ENCODE measurements at regions of chr17 and their contacts with region 1.

Region 1: DNA sequence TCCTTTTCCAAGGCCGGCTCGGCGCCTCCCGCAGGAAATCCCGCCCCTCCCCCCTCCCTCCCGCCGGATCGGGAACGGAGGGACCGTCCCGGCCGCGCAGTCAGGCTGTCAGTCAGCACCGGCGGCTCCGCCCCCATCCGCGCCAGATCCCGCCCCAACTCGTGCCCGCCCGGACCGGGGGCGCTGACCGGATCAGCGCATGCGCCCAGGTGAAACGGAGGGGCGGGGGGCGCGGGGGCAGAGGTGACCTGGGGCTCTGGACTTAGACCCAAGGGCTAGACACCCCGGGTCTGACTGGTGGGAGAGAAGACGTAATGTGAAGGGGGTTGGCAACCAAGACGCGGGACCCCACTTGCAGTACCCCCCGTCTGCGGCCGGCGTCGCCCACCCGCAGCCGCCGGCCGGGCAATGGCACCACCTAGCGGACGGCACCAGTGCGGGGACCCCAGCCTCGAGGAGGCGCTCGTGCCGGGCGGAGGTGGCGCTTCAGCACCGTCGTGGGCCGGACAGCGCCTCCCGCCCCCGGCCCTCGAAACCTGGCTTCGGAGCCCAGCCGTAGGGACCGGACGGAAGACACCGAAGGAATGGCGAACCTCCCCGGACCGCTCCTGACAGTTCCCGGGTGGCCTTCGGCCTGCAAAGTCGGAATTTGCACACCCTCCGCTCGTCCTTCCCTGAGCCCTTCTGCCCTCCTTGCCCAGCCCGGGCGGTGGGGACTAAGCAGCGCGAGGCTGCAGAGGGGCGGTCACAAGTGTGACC is at the start of gene CASKIN2:
- DNase-seq: peak; percentile 91
- H3K4me3 ChIP-seq: peak within 1 kb of the TSS; percentile 91
- H3K27ac ChIP-seq: peak within 1 kb of the TSS; percentile 13
- H3K4me1 ChIP-seq: peaks cover 31% of the 10 kb centered on the region
- CTCF ChIP-seq: peak; percentile 100
- total RNA-seq, gene CASKIN2: not detected in 2 replicates

Region 2: DNA sequence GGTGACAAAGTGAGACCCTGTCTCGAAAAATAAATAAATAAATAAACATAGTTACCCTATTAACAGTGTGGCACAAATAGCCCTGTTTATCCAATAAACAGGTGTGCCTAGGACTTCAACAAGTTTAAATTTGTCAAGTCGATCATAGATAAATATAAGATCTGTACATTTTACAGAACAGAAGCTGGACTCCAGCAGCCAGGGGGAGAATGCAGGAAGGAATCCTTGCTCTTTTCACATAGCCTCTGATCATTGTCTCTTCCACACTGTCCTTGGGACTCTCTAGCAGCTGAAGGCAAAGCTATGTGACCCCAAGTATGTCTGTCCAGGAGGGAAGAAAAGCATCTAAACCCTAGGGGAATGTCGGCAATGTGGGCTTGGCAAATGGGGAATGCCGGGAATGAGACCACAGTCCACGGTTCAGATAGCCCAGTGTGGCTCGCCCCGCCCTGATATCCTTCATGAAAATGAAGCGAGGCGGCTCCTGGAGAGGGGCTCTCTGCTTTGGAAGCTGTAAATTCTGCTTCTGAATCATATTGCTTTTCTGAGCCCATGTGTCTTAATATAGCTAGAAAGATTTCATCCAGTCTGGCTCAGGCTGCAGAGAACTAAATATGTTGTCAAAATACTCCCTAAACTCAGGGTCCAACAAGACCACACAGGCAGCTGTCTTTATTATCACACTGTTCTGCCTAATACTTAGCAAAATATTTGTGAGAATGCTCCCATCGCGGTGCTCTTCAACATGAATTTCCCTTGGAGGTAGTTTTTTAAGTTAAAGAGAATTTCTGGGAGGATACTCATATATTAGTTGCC is 85.3 kb before region 1 on chr17:
- CTCF ChIA-PET with region 1: no interaction called
- POLR2A ChIA-PET with region 1: interaction called, 3 read pairs
- intact Hi-C with region 1: loop called (anchors 1 kb)
- DNase-seq: no peak
- H3K4me3 ChIP-seq: no peak overlapping the region
- H3K27ac ChIP-seq: no peak overlapping the region
- H3K4me1 ChIP-seq: peaks cover 7% of the 10 kb centered on the region
- CTCF ChIP-seq: no peak

Region 3: GRCh38 chr17:75565068-75565467 is 49.4 kb after region 1 on chr17:
- CTCF ChIA-PET with region 1: no interaction called
- POLR2A ChIA-PET with region 1: interaction called, 3 read pairs
- intact Hi-C with region 1: loop called (anchors 5 kb)
- DNase-seq: no peak
- H3K4me3 ChIP-seq: no peak overlapping the region
- H3K27ac ChIP-seq: no peak overlapping the region
- H3K4me1 ChIP-seq: peaks cover 27% of the 10 kb centered on the region
- CTCF ChIP-seq: no peak

Region 4: DNA sequence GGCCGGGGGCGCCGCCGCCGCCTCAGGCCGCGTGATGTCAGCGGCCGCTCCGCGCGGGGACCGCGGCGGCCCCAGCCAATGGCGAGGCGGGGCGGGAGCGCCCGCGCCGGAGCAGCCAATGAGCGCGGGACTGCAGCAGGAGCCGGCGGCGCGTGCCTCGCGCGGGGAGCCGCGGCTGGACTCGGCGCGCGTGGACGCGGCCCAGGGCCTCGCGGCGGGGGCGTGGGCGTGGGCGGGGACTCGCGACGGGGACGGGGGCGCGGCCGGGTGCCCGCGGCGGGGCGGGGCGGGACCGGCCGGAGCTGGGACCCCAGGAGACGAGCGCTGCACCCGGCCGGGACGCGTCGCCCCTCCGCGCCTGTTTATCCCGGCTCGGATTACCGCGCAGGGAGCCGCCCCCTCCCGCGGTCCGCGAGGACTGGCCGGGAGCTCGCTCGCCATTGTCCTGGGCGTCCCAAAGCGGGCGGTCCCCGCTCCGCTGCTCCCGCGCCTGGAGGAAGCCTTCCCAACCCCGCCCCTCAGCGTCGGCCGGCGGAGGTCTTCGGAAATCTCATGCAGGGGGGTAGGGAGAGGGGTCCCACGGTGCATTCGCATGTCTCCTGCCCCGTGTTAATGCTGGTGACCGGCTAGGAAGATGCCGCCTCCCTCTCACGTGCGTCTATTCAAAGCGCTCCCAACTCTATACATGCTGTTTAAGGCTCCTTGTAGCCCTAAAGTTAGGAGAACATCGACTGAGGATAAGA is 725.0 kb after region 1 on chr17 and contains the start of gene RNF157:
- CTCF ChIA-PET with region 1: no interaction called
- POLR2A ChIA-PET with region 1: no interaction called
- intact Hi-C with region 1: no loop called
- DNase-seq: no peak
- H3K4me3 ChIP-seq: no peak within 1 kb of the TSS
- H3K27ac ChIP-seq: no peak within 1 kb of the TSS
- H3K4me1 ChIP-seq: no peaks in the 10 kb centered on the region
- CTCF ChIP-seq: no peak
- total RNA-seq, gene RNF157: 0.21 and 0.28 TPM in 2 replicates